ENCODE measurements at regions of chr18 and their contacts with region 1.

Region 1: GRCh38 chr18:11937874-11938478 is 29.9 kb upstream of the MPPE1 start:
- DNase-seq: peak; percentile 79
- H3K4me3 ChIP-seq: no peak overlapping the region
- H3K27ac ChIP-seq: no peak overlapping the region
- H3K4me1 ChIP-seq: no peaks in the 10 kb centered on the region
- H3K27me3 ChIP-seq: no peaks in the 10 kb centered on the region
- CTCF ChIP-seq: peak; percentile 63 to 90 (median 86)
- POLR2A ChIP-seq: no peak

Region 2: GRCh38 chr18:11357678-11358077 is 580.3 kb before region 1 on chr18:
- intact Hi-C with region 1: no loop called
- DNase-seq: no peak
- H3K4me3 ChIP-seq: no peak overlapping the region
- H3K27ac ChIP-seq: no peak overlapping the region
- H3K4me1 ChIP-seq: no peaks in the 10 kb centered on the region
- H3K27me3 ChIP-seq: no peaks in the 10 kb centered on the region
- CTCF ChIP-seq: no peak
- POLR2A ChIP-seq: no peak

Region 3: GRCh38 chr18:11654736-11655605 is 283.0 kb before region 1 on chr18:
- intact Hi-C with region 1: loop called (anchors 10 kb)
- DNase-seq: peak; percentile 58
- H3K4me3 ChIP-seq: no peak overlapping the region
- H3K27ac ChIP-seq: no peak overlapping the region
- H3K4me1 ChIP-seq: no peaks in the 10 kb centered on the region
- H3K27me3 ChIP-seq: peaks cover 6% of the 10 kb centered on the region
- CTCF ChIP-seq: peak; percentile 63 to 86 (median 76)
- POLR2A ChIP-seq: no peak

Region 4: DNA sequence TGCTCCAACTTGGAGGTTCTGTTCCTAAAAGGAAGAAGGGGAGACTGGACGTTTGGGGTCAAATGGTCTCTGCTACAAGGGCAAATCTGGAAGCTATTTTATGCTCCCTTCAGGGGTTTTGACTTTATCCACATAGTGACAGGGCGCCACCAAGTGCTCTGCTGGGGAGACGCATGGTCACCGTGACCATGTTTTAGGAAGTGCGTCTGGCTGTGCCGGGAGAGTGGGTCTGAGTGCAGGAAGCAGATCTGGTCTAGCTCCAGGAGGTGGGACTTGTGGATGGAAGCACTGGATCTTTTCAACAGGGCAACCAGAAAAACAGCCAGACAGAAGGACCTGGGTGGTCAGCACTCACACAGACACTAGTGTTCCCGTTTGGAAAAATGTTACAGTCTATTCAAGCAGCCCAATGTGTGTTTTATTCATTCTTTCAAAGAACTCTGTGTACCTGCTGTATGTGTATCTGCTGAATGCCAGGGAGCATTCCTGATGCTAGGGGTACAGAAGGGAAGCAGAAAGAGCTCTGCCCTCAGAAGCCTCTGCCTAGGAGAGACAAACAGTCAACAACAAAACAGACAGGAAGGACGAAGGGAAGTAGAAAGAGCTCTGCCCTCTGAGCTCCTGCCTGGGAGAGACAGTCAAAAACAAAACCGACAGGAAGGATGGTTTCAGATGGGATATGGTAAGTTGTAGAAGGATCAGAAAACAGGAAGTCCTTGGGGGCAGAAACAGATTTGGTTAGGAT is 57.6 kb after region 1 on chr18:
- intact Hi-C with region 1: loop called (anchors 1 kb)
- DNase-seq: peak; percentile 65
- H3K4me3 ChIP-seq: no peak overlapping the region
- H3K27ac ChIP-seq: peak overlapping the region; percentile 8 to 53
- H3K4me1 ChIP-seq: no peaks in the 10 kb centered on the region
- H3K27me3 ChIP-seq: no peaks in the 10 kb centered on the region
- CTCF ChIP-seq: peak; percentile 31 to 80 (median 70)
- POLR2A ChIP-seq: no peak

Region 5: DNA sequence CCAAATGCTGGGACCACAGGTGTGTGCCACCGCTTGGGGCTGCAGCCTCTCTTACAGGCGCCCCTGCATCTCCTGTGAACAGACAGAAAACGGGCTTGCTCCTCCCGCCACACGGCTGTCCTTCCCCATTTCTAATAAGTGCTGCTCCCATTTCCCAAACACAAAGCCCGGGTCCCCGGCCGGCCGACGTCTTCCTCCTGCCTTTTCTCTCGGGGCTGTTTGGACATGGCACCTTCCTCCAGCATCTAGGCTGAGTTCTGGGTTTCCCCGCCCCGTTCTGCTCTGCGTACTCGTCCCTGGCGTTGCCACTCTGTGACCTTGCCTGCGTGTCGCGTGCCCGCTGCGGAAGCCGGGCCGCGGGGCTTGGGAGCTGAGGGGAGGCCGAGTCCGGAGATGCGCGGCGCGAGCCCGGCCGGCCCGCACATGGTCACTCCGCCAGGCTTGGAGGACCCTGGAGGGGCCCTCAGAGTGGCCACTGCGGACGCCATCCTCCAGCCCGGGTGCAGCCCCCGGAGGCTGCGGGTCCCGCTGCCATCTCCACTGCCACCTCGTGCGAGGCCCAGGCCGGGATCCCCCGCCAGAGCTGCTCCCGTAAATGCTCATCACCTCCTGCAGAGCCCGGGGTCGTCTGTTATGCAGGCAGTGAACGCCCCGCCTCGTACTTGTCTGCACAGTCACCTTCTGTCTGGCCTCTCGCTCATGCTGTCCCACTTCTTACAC is 496.0 kb after region 1 on chr18:
- intact Hi-C with region 1: no loop called
- DNase-seq: no peak
- H3K4me3 ChIP-seq: no peak overlapping the region
- H3K27ac ChIP-seq: no peak overlapping the region
- H3K4me1 ChIP-seq: no peaks in the 10 kb centered on the region
- H3K27me3 ChIP-seq: no peaks in the 10 kb centered on the region
- CTCF ChIP-seq: no peak
- POLR2A ChIP-seq: no peak

Region 6: GRCh38 chr18:12726774-12727550 is 789.0 kb after region 1 on chr18:
- intact Hi-C with region 1: no loop called
- DNase-seq: peak; percentile 65
- H3K4me3 ChIP-seq: no peak overlapping the region
- H3K27ac ChIP-seq: no peak overlapping the region
- H3K4me1 ChIP-seq: no peaks in the 10 kb centered on the region
- H3K27me3 ChIP-seq: no peaks in the 10 kb centered on the region
- CTCF ChIP-seq: peak; percentile 65 to 91 (median 82)
- POLR2A ChIP-seq: no peak

Measured in prostate gland (tissue), 2 donors.